Left ventricle myocardium inferior (tissue), 1 donor: ENCODE measurements at regions of chr1 and their contacts with region 1.

Region 1: DNA sequence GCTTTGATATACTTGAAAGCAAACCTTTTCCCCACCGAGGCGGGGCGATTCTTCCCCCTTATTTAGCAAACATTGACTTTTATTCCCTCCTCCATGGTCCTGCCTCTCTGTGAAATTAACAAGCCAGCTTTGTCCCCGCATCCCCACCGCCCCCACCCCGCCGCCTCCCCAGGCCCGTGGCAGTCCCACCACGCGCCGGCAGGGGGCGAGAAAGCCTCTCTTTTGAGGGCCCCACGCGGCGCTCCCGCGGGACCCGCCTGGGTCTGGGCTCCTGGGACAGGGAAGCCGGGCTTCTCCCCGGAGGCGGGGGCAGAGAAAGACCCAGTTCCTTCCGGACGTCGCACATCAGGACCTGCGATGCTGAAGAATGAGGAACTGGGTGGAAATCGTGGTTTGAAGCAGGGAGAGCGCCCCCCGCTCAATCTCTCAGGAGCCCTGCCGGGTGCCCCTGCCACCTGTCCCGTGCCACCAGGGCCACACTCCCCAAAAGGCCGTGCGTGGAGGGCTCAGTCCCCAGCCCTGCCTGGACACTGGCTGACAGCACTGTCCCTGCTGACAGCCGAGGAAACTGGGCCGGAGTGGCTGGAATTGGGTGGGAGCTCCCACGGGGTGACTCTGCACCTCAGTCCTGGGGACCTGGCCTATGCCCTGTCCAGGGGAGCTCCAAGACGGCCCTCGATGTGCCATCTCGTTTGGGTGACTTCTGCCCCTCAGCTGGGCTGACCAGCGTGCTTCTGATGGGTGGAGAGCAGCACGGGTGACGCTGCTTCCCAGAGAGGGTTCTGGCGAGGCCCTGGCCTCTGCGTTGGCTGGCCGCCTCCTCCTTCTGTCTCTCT is 8.6 kb upstream of the ACTRT2 start:
- DNase-seq: peak; percentile 48
- H3K4me3 ChIP-seq: no peak overlapping the region
- H3K27ac ChIP-seq: no peak overlapping the region
- H3K4me1 ChIP-seq: no peaks in the 10 kb centered on the region
- H3K27me3 ChIP-seq: peaks cover 81% of the 10 kb centered on the region
- CTCF ChIP-seq: peak; percentile 88

Region 2: DNA sequence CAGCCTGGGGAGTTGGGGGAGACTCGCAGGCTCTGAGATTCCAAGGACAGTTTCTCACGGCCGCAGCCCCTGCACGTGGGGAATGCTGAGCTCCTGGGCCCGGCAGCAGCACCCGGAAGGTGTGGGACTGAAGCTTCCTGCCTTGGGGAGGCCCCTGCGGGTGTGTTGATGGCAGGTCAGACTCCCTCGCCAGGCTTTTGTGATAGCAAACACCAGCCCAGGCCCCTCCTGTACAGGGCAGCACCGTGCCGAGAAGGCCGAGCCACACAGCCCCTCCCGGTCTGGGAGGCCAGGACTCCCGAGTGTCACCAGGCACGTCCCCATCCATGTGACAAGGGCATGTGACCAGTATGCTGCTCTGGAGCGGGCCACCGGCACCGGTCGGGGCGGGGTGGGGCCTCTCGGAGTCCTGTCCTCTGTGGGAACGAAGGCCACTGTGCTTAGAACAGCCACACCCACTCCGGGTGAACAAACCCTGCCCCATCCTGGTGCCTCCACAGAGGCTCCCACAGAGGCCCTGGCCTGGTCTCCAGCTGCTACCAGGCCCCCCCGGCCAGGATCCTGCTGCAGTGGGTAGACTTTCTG is 410.7 kb after region 1 on chr1:
- intact Hi-C with region 1: loop called (anchors 5 kb)
- DNase-seq: peak; percentile 88
- H3K4me3 ChIP-seq: peak overlapping the region; percentile 38
- H3K27ac ChIP-seq: peak overlapping the region; percentile 93
- H3K4me1 ChIP-seq: peaks cover 48% of the 10 kb centered on the region
- H3K27me3 ChIP-seq: peaks cover 3% of the 10 kb centered on the region
- CTCF ChIP-seq: no peak